Activated CD8-positive, alpha-beta T cell treated with anti-CD3 and anti-CD28 coated beads, Interleukin-2, amount 10 ng/mL, durations not matched to agents 7 days and 5 days (primary cell): ENCODE measurements at regions of chr11 and their contacts with region 1.

Region 1: DNA sequence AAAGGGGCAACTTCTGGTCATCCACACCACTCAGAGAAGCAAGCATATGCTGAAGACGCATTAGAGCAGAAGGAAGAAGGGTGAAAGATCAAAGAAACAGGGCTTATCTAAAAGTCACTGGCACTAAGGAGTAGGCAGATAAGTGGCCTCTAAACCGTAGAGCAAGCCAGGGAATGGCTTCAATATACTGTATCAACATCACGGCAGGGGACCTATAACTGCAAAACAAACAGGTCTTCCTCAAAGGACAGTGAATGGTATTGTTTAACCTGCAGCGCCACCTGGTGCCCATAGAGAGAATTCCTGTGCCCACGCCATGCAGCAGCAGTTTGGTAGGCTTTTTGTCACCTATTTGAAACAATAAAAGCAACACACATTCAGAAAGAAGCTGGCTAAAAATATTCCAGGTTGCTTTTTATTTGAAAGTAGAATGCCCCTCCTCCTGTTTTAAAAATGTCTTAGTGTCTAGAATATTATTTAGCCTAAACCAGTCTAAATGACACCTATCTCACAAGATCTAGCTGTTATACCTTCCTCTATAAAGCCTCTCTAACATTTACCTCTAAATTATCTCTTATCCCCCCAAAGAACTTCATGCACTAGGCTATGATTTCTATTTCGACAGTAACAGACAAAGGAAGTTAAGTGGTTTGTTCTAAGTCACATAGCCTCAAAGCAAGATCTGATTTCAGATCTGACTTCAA is 21.8 kb downstream of the SNX19 start:
- DNase-seq: peak; percentile 75
- ATAC-seq: peak; percentile 91
- H3K4me3 Mint-ChIP-seq: no peak overlapping the region
- H3K27ac Mint-ChIP-seq: no peak overlapping the region
- H3K4me1 Mint-ChIP-seq: no peaks in the 10 kb centered on the region
- H3K27me3 Mint-ChIP-seq: no peaks in the 10 kb centered on the region

Region 2: GRCh38 chr11:130882138-130882551 is 12.3 kb before region 1 on chr11:
- CTCF ChIA-PET with region 1: interaction called, 19 read pairs
- POLR2A ChIA-PET with region 1: no interaction called
- DNase-seq: no peak
- ATAC-seq: no peak
- H3K4me3 Mint-ChIP-seq: no peak overlapping the region
- H3K27ac Mint-ChIP-seq: no peak overlapping the region
- H3K4me1 Mint-ChIP-seq: peaks cover 3% of the 10 kb centered on the region
- H3K27me3 Mint-ChIP-seq: no peaks in the 10 kb centered on the region

Region 3: DNA sequence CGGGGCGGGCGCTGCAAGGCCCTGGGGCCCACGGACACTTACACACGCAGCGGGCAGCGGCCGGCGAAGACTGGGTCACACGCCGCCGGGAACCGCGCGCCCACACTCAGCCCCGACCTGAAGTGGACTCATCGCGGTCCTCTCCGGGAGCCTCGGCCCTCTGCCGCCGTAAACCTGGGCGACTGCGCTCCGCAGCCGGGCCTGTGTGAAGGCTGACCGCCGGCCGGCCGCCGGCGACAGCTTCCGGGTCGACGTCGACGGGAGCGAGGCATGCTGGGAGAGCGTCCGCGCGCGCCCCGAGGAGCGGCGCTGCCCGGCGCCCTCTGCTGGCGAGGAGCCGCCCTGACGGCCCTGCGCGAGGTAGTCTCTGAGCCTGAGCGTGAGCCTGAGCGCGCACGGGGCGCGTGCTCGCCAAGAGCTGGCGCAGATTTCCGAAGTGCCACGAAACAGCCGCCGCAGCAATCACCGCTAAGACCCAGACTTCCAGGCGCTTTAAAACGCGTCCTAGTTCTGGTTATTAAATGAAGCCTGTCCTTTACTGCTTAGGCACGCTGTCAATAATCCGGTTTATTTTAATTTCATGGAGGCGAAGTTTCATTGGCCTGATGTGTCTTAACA is 21.9 kb after region 1 on chr11 and contains the start of gene SNX19:
- CTCF ChIA-PET with region 1: interaction called, 23 read pairs
- POLR2A ChIA-PET with region 1: interaction called, 4 read pairs
- DNase-seq: peak; percentile 91
- ATAC-seq: peak; percentile 100
- H3K4me3 Mint-ChIP-seq: peak within 1 kb of the TSS; percentile 83
- H3K27ac Mint-ChIP-seq: peak within 1 kb of the TSS; percentile 84
- H3K4me1 Mint-ChIP-seq: peaks cover 28% of the 10 kb centered on the region
- H3K27me3 Mint-ChIP-seq: peaks cover 2% of the 10 kb centered on the region
- total RNA-seq, gene SNX19: 40.7 to 41.0 TPM